Activated CD4-positive, alpha-beta memory T cell treated with anti-CD3 and anti-CD28 coated beads for 36 hours (primary cell): ENCODE measurements at regions of chr7 and their contacts with region 1.

Region 1: DNA sequence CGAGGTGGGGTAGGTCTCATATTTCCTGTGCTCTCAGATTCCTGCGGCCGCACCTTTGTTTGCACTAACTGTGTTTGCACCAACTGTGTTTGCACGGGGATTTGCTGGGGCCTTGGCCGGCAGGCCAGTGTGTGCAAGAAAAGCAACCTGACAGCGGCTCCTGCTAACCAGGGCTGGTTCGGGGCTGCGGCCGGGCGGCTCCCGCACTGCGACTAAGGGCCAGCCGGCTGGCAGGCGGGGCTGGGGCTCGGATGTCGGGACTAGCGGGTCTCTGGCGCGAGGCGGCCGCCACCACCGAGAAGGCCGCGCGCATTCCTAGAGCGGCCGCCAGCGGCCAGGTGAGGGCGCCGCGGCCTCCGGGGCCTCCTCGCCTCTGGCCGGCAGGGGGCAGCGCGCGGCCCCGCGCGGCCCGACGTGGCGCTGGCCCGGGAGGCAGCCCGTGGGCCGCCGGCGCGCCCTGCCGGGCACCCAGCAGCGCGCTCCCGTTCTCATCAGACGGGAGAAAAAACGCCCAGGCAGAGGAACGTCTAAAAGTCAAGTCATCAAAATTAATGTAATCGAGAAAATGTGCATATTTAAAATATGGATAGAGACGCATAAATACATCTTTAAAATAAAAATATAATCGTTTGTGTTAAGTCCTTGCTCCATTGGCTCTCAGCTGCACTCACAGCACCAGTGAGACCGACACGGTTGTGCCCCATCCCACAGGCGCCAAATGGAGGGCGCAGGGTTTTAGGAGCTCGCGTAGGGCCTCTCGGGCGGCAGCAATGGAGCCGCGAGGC is 38.5 kb downstream of the ZNF777 start:
- DNase-seq: peak; percentile 80
- H3K4me3 Mint-ChIP-seq: peak overlapping the region; percentile 72
- H3K27ac Mint-ChIP-seq: peak overlapping the region; percentile 51
- H3K4me1 Mint-ChIP-seq: peaks cover 9% of the 10 kb centered on the region
- H3K27me3 Mint-ChIP-seq: no peaks in the 10 kb centered on the region

Region 2: DNA sequence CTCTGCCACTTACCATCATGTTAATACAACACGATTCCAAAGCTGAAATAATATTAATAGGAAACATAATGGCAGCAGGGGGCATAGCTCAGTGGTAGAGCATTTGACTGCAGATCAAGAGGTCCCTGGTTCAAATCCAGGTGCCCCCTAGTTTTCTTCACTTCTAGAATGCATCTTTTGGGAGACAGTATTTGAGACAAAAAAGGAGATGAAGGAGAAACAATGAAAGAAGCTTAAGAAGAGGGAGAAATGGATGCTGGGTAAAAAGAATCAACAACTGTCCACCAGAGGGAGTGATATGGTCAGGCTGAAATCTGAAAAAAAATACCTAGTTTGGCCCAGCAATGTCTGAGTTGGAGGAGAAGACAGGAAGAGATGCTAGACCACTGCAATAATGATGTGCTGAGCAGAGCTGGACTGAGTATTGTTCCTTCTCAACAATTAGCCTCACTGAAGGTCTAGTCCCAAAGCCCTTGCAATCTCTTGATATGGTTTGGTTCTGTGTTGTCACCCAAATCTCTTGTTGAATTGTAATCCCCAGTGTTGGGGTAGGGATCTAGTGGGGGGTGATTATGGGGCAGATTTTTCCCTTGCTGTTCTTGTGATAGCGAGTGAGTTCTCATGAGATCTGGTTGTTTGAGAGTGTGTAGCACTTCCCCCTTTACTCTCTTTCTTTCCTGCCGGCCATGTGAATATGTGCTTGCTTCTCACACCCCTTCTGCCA is 112.0 kb before region 1 on chr7:
- CTCF ChIA-PET with region 1: interaction called, 11 read pairs
- POLR2A ChIA-PET with region 1: no interaction called
- intact Hi-C with region 1: no loop called
- DNase-seq: no peak
- H3K4me3 Mint-ChIP-seq: no peak overlapping the region
- H3K27ac Mint-ChIP-seq: no peak overlapping the region
- H3K4me1 Mint-ChIP-seq: no peaks in the 10 kb centered on the region
- H3K27me3 Mint-ChIP-seq: no peaks in the 10 kb centered on the region

Region 3: GRCh38 chr7:149460493-149461277 is 38.4 kb after region 1 on chr7 and contains the start of gene ZNF777:
- CTCF ChIA-PET with region 1: interaction called, 21 read pairs
- POLR2A ChIA-PET with region 1: interaction called, 5 read pairs
- intact Hi-C with region 1: loop called (anchors 1 kb)
- DNase-seq: peak; percentile 88
- H3K4me3 Mint-ChIP-seq: peak within 1 kb of the TSS; percentile 82
- H3K27ac Mint-ChIP-seq: peak within 1 kb of the TSS; percentile 44
- H3K4me1 Mint-ChIP-seq: peaks cover 19% of the 10 kb centered on the region
- H3K27me3 Mint-ChIP-seq: peaks cover 2% of the 10 kb centered on the region
- total RNA-seq, gene ZNF777: 10.1 to 11.4 TPM